Activated CD4-positive, alpha-beta T cell treated with anti-CD3 and anti-CD28 coated beads for 36 hours (primary cell): ENCODE measurements at regions of chr10 and their contacts with region 1.

Region 1: DNA sequence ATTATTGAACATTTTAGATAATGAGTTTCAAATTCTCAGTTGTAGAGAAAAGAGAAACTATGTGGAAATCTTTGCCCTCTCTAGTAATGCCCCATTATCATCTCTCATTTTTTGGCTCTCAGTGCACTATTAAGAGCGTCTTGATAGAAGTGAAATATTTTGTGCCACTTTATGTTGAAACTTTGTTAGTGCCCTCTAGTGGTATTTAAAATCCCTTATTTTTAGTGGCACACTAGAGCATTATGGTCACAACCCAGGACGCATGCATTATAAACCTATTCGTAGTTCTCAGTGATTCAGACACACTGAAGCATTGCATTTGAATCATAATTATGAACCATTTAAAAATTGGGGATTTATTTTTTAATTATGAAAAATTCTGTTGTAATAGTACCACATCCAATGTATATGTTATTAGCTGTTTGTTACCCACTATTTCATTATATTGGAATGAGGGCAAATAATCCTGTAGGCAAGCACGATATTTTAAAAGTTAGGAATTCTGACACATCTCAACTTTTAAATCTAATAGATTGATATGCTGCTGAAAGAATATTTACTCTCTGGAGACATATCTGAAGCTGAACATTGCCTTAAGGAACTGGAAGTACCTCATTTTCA is 21.9 kb downstream of the PDCD4 start:
- DNase-seq: no peak
- ATAC-seq: peak; percentile 87
- H3K4me3 Mint-ChIP-seq: no peak overlapping the region
- H3K27ac Mint-ChIP-seq: no peak overlapping the region
- H3K4me1 Mint-ChIP-seq: peaks cover 33% of the 10 kb centered on the region
- H3K27me3 Mint-ChIP-seq: no peaks in the 10 kb centered on the region

Region 2: GRCh38 chr10:110803830-110804338 is 89.8 kb before region 1 on chr10:
- CTCF ChIA-PET with region 1: interaction called, 4 read pairs
- POLR2A ChIA-PET with region 1: no interaction called
- intact Hi-C with region 1: loop called (anchors 1 to 5 kb)
- DNase-seq: peak; percentile 52
- ATAC-seq: peak; percentile 72
- H3K4me3 Mint-ChIP-seq: no peak overlapping the region
- H3K27ac Mint-ChIP-seq: peak overlapping the region; percentile 6
- H3K4me1 Mint-ChIP-seq: peaks cover 30% of the 10 kb centered on the region
- H3K27me3 Mint-ChIP-seq: no peaks in the 10 kb centered on the region

Region 3: DNA sequence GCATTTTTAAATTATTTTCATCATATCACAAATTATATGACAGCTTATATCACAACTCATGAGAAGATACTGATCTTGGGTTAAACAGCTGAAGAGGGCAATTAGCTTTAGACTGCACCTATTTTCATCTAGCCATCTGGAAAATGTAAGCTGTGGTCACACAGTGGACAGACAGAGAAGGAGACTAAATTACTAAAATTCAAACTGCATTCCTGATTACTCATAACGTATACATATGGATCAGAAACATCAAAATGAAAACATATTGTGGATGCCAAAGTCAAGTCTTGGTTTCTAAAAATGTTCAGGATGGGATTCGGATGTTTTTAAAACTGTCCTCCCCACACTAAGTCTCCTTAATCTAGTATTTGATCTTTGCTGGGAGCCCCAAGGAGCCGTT is 18.7 kb after region 1 on chr10:
- CTCF ChIA-PET with region 1: interaction called, 16 read pairs
- POLR2A ChIA-PET with region 1: no interaction called
- intact Hi-C with region 1: no loop called
- DNase-seq: no peak
- ATAC-seq: no peak
- H3K4me3 Mint-ChIP-seq: no peak overlapping the region
- H3K27ac Mint-ChIP-seq: no peak overlapping the region
- H3K4me1 Mint-ChIP-seq: peaks cover 27% of the 10 kb centered on the region
- H3K27me3 Mint-ChIP-seq: no peaks in the 10 kb centered on the region